Activated B cell treated with CpG ODN at 0.5 μM for 24 hours (primary cell): ENCODE measurements at regions of chr11 and their contacts with region 1.

Region 1: GRCh38 chr11:78564490-78565467 is 9.9 kb downstream of the NARS2 start:
- DNase-seq: no peak
- ATAC-seq: peak; percentile 67
- H3K4me3 Mint-ChIP-seq: no peak overlapping the region
- H3K27ac Mint-ChIP-seq: no peak overlapping the region
- H3K4me1 Mint-ChIP-seq: peaks cover 37% of the 10 kb centered on the region
- H3K27me3 Mint-ChIP-seq: no peaks in the 10 kb centered on the region
- CTCF ChIP-seq: no peak

Region 2: GRCh38 chr11:77776455-77776854 is 788.3 kb before region 1 on chr11:
- CTCF ChIA-PET with region 1: no interaction called
- POLR2A ChIA-PET with region 1: no interaction called
- intact Hi-C with region 1: loop called (anchors 2 kb)
- DNase-seq: no peak
- ATAC-seq: no peak
- H3K4me3 Mint-ChIP-seq: no peak overlapping the region
- H3K27ac Mint-ChIP-seq: no peak overlapping the region
- H3K4me1 Mint-ChIP-seq: peaks cover 55% of the 10 kb centered on the region
- H3K27me3 Mint-ChIP-seq: no peaks in the 10 kb centered on the region
- CTCF ChIP-seq: no peak

Region 3: GRCh38 chr11:78045851-78046485 is 518.8 kb before region 1 on chr11:
- CTCF ChIA-PET with region 1: interaction called, 11 read pairs
- POLR2A ChIA-PET with region 1: no interaction called
- intact Hi-C with region 1: loop called (anchors 1 kb)
- DNase-seq: peak; percentile 81
- ATAC-seq: peak; percentile 98
- H3K4me3 Mint-ChIP-seq: peak overlapping the region; percentile 72
- H3K27ac Mint-ChIP-seq: no peak overlapping the region
- H3K4me1 Mint-ChIP-seq: peaks cover 6% of the 10 kb centered on the region
- H3K27me3 Mint-ChIP-seq: peaks cover 5% of the 10 kb centered on the region
- CTCF ChIP-seq: peak; percentile 95

Region 4: DNA sequence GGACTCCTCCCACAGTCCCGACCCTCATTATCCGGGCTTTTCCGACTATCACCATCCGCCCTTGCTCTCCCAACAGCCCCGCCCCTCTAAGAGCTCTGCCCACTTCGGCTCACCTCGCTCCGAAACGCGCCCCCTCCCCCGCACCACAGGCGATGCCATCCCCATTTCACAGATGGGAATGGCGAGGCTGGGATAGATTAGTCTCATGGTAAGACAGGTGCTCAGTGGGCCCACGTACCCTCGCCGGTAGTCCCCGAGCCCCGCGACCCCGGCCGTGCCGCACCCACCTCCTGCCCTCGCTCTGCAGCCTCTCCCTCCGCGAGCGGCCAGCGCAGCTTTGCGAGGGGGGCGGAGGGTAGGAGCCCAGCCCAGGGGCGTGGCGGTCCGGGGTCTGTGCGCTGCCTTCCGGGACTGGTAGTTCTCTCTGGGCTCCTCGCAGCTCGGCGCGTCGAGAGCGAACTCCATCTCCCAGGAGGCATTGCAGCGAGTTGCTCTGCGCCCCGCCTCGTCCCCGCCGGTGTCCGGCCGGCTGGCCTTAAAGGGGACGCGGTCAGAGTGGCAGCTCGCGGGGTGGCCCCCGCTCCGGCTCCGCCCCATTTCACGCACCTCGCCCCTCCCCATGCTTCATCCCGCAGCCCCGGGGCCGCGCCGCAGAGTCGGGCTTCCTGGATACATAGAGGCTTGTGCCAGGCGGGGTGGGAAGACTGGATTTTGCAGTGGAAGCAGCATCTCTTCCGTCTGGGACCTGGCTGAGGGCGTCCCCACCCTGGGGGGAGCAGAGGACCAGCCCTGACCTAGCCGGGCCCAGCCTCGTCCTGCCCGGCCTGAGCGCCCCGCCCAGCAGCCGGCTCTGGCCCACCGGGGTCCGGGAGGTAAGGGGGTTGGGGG is 376.2 kb before region 1 on chr11 and contains the starts of genes KCTD21 and USP35:
- CTCF ChIA-PET with region 1: interaction called, 4 read pairs
- POLR2A ChIA-PET with region 1: no interaction called
- intact Hi-C with region 1: loop called (anchors 2 kb)
- DNase-seq: peak; percentile 92
- ATAC-seq: peak; percentile 95
- H3K4me3 Mint-ChIP-seq: peak within 1 kb of the TSS; percentile 95
- H3K27ac Mint-ChIP-seq: peak within 1 kb of the TSS; percentile 87
- H3K4me1 Mint-ChIP-seq: peaks cover 36% of the 10 kb centered on the region
- H3K27me3 Mint-ChIP-seq: no peaks in the 10 kb centered on the region
- CTCF ChIP-seq: no peak
- total RNA-seq, gene KCTD21: 3.2 and 3.5 TPM in 2 replicates
- total RNA-seq, gene USP35: 3.5 and 4.9 TPM in 2 replicates

Region 5: DNA sequence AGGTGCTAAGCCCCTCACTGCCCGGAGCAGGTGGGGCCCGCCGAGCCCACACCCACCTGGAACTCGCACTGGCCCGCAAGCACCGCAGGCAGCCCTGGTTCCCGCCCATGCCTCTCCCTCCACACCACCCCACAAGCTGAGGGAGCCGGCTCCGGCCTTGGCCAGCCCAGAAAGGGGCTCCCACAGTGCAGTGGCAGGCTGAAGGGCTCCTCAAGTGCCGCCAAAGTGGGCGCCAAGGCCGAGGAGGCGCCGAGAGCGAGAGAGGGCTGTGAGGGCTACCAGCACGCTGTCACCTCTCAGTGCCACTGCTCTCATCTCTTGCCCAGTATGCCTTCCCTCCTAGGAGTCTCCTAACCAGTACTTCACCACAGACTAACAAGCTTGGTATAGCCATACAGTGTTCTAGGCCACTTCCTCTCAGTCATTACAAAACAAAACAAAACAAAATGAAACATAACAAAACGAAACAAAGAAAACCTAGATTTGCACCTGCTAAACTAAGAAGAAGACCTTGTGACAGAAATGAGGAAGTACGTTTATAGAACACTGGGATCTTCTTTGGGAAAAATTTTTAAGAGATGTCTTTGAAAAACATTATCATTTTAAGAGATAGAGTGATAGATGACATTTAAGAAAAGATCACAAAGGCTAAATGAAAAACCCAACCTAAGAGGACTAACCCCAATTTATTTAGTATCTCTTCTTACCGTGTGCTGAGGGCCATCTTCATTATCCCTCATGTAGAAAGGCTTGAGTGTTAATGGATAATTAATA is 99.4 kb before region 1 on chr11:
- CTCF ChIA-PET with region 1: interaction called, 3 read pairs
- POLR2A ChIA-PET with region 1: no interaction called
- intact Hi-C with region 1: loop called (anchors 5 kb)
- DNase-seq: peak; percentile 35
- ATAC-seq: peak; percentile 93
- H3K4me3 Mint-ChIP-seq: peak overlapping the region; percentile 64
- H3K27ac Mint-ChIP-seq: peak overlapping the region; percentile 90
- H3K4me1 Mint-ChIP-seq: peaks cover 44% of the 10 kb centered on the region
- H3K27me3 Mint-ChIP-seq: no peaks in the 10 kb centered on the region
- CTCF ChIP-seq: no peak

Region 6: DNA sequence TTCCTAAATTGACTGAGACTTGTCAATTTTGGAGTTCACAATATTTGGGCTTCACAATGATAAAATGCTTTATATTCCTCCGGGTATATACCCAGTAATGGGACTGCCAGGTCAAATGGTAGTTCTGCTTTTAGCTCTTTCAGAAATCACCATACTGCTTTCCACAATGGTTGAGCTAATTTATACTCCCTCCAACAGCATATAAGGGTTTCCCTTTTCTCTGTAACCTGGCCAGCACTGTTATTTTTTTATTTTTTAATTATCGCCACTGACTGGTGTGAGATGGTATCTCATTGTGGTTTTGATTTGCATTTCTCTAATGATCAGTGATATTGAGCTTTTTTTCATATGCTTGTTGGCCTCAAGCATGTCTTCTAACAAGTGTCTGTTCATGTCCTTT is 11.9 kb before region 1 on chr11:
- CTCF ChIA-PET with region 1: interaction called, 12 read pairs
- POLR2A ChIA-PET with region 1: no interaction called
- intact Hi-C with region 1: no loop called
- DNase-seq: no peak
- ATAC-seq: no peak
- H3K4me3 Mint-ChIP-seq: no peak overlapping the region
- H3K27ac Mint-ChIP-seq: no peak overlapping the region
- H3K4me1 Mint-ChIP-seq: no peaks in the 10 kb centered on the region
- H3K27me3 Mint-ChIP-seq: no peaks in the 10 kb centered on the region
- CTCF ChIP-seq: no peak

Region 7: GRCh38 chr11:78605296-78605695 is 40.5 kb after region 1 on chr11:
- CTCF ChIA-PET with region 1: no interaction called
- POLR2A ChIA-PET with region 1: no interaction called
- intact Hi-C with region 1: no loop called
- DNase-seq: no peak
- ATAC-seq: no peak
- H3K4me3 Mint-ChIP-seq: no peak overlapping the region
- H3K27ac Mint-ChIP-seq: no peak overlapping the region
- H3K4me1 Mint-ChIP-seq: no peaks in the 10 kb centered on the region
- H3K27me3 Mint-ChIP-seq: peaks cover 36% of the 10 kb centered on the region
- CTCF ChIP-seq: no peak